ENCODE measurements at regions of chr17 and their contacts with region 1.

Region 1: DNA sequence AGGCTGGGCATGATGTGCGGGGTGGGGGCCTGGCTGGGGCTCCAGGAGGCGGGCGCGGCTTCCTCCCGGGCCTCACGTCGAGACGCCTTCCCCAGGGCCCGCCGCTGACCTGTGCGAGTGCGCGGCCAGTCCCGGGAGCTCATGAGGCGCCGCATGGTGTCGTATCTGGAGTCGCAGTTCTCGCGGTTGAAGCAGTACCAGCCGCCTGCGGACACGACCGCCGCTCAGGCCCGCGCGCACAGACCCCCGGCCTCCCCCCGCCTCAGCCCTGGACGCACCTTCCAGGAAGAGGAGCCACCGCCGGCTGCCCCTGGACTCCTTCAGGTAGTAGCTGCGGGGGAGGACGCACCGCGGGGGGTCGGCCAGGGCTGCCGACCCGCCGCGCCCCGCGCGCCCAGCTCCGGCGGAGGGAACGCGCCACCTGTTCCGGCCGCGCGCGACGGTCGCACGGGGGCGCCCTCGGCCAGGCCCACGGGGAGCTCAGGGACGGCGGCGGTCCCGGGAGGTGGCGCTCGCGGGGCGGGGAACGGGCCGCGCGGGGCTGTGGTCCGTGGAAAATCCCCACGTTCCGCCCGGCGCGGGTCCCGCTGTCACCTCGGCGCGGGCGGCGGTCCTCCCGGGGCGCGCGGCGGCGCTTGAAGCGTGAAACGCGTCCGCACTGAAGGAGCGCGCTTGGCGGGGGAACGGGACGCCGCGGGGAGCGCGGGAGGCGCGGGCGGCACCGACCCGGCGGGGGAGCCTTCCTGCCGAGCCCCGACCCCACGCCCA is 1.4 kb downstream of the NOTUM start:
- DNase-seq: peak; percentile 95
- H3K4me3 ChIP-seq: peak overlapping the region; percentile 20 to 75 (median 48)
- H3K27ac ChIP-seq: no peak overlapping the region
- H3K4me1 ChIP-seq: peaks cover 9 to 34% (median 24%) of the 10 kb centered on the region in 6 donors
- H3K27me3 ChIP-seq: peaks cover 4 to 93% (median 59%) of the 10 kb centered on the region in 7 donors
- CTCF ChIP-seq: peak in 6 of 11 experiments; percentile 74 to 97 (median 86)
- POLR2A ChIP-seq: no peak

Region 2: GRCh38 chr17:82022981-82023374 is 63.4 kb after region 1 on chr17 and contains the start of gene LRRC45:
- intact Hi-C with region 1: loop called (anchors 5 kb)
- DNase-seq: peak; percentile 99
- H3K4me3 ChIP-seq: peak within 1 kb of the TSS; percentile 75 to 99 (median 91)
- H3K27ac ChIP-seq: peak within 1 kb of the TSS; percentile 4 to 88 (median 73)
- H3K4me1 ChIP-seq: peaks cover 25 to 55% (median 36%) of the 10 kb centered on the region in 6 donors
- H3K27me3 ChIP-seq: no peaks in the 10 kb centered on the region
- CTCF ChIP-seq: peak in 2 of 11 experiments; percentile 6 to 23
- POLR2A ChIP-seq: no peak
- total RNA-seq, gene LRRC45: 7.5 to 13.7 (median 11.5) TPM